Activated CD4-positive, alpha-beta T cell treated with anti-CD3 and anti-CD28 coated beads for 36 hours (primary cell): ENCODE measurements at regions of chr3 and their contacts with region 1.

Region 1: GRCh38 chr3:169812332-169813235 is at the starts of genes LRRC34 and LRRIQ4:
- DNase-seq: peak; percentile 90
- ATAC-seq: peak; percentile 77
- H3K4me3 Mint-ChIP-seq: peak within 1 kb of the TSS; percentile 77
- H3K27ac Mint-ChIP-seq: peak within 1 kb of the TSS; percentile 82
- H3K4me1 Mint-ChIP-seq: peaks cover 27% of the 10 kb centered on the region
- H3K27me3 Mint-ChIP-seq: peaks cover 2% of the 10 kb centered on the region
- total RNA-seq, gene LRRC34: 3.8 TPM
- total RNA-seq, gene LRRIQ4: 0.09 to 0.12 TPM

Region 2: GRCh38 chr3:169772897-169773828 is 39.4 kb before region 1 on chr3 and contains the start of gene MYNN:
- CTCF ChIA-PET with region 1: interaction called, 8 read pairs
- POLR2A ChIA-PET with region 1: no interaction called
- intact Hi-C with region 1: loop called (anchors 1 kb)
- DNase-seq: peak; percentile 95
- ATAC-seq: peak; percentile 80
- H3K4me3 Mint-ChIP-seq: peak within 1 kb of the TSS; percentile 99
- H3K27ac Mint-ChIP-seq: peak within 1 kb of the TSS; percentile 100
- H3K4me1 Mint-ChIP-seq: peaks cover 45% of the 10 kb centered on the region
- H3K27me3 Mint-ChIP-seq: no peaks in the 10 kb centered on the region
- total RNA-seq, gene MYNN: 13.6 to 14.2 TPM

Region 3: GRCh38 chr3:169863458-169863899 is 50.9 kb after region 1 on chr3:
- CTCF ChIA-PET with region 1: interaction called, 3 read pairs
- POLR2A ChIA-PET with region 1: no interaction called
- intact Hi-C with region 1: loop called in 1 of 2 experiments (anchors 5 kb)
- DNase-seq: peak; percentile 77
- ATAC-seq: peak; percentile 61
- H3K4me3 Mint-ChIP-seq: no peak overlapping the region
- H3K27ac Mint-ChIP-seq: no peak overlapping the region
- H3K4me1 Mint-ChIP-seq: peaks cover 18% of the 10 kb centered on the region
- H3K27me3 Mint-ChIP-seq: peaks cover 4% of the 10 kb centered on the region

Region 4: GRCh38 chr3:170037463-170038433 is 225.2 kb after region 1 on chr3 and contains the start of gene GPR160:
- CTCF ChIA-PET with region 1: no interaction called
- POLR2A ChIA-PET with region 1: no interaction called
- intact Hi-C with region 1: loop called in 1 of 2 experiments (anchors 5 kb)
- DNase-seq: peak; percentile 92
- ATAC-seq: peak; percentile 92
- H3K4me3 Mint-ChIP-seq: peak within 1 kb of the TSS; percentile 79
- H3K27ac Mint-ChIP-seq: no peak within 1 kb of the TSS
- H3K4me1 Mint-ChIP-seq: peaks cover 19% of the 10 kb centered on the region
- H3K27me3 Mint-ChIP-seq: no peaks in the 10 kb centered on the region
- total RNA-seq, gene GPR160: 9.4 to 11.1 TPM

Region 5: GRCh38 chr3:170089862-170090600 is 277.4 kb after region 1 on chr3:
- CTCF ChIA-PET with region 1: no interaction called
- POLR2A ChIA-PET with region 1: interaction called, 10 read pairs
- intact Hi-C with region 1: no loop called
- DNase-seq: no peak
- ATAC-seq: peak; percentile 58
- H3K4me3 Mint-ChIP-seq: no peak overlapping the region
- H3K27ac Mint-ChIP-seq: peak overlapping the region; percentile 42
- H3K4me1 Mint-ChIP-seq: peaks cover 9% of the 10 kb centered on the region
- H3K27me3 Mint-ChIP-seq: no peaks in the 10 kb centered on the region